ENCODE measurements at regions of chr17 and their contacts with region 1.

Region 1: DNA sequence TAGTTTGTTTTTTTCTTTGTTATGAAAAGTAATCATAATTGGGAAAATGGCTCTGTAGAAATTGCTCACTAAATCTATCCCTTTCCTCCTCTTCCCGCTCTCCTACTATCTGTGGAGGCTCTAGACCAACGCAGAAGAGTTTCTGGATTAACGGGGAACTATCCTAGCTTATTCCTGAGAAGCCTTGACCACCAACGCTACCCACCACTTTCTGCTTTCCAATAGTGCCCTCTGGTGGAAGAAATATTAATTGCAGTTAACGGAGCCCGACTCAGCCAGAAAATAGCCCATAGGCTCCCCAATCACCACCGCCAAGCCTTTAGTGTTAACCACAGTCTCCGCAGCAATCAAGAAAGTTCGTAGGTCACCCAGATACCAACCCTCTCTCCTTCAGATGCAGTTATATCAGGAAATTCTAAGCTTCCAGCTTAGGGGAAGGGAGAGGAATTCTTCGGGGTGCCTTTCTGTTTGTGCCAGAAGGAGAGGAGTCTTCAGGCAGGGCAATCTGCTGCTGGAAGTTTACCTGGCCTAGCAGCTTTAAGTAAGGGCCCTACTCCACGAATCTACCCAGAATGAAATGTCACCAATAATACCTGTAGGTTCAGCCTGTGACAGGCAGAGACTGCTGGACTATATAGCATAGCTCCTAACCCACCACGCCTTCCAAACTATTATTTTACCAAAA is 23.0 kb upstream of the NSRP1 start:
- DNase-seq: peak; percentile 89
- H3K4me3 Mint-ChIP-seq: no peak overlapping the region
- H3K27ac Mint-ChIP-seq: no peak overlapping the region
- H3K4me1 Mint-ChIP-seq: peaks cover 4% of the 10 kb centered on the region
- H3K27me3 Mint-ChIP-seq: peaks cover 49% of the 10 kb centered on the region

Region 2: GRCh38 chr17:30027676-30028075 is 65.9 kb before region 1 on chr17:
- intact Hi-C with region 1: loop called (anchors 2 kb)
- DNase-seq: no peak
- H3K4me3 Mint-ChIP-seq: no peak overlapping the region
- H3K27ac Mint-ChIP-seq: no peak overlapping the region
- H3K4me1 Mint-ChIP-seq: no peaks in the 10 kb centered on the region
- H3K27me3 Mint-ChIP-seq: peaks cover 3% of the 10 kb centered on the region

Region 3: GRCh38 chr17:30848021-30848420 is 754.4 kb after region 1 on chr17:
- intact Hi-C with region 1: no loop called
- DNase-seq: no peak
- H3K4me3 Mint-ChIP-seq: no peak overlapping the region
- H3K27ac Mint-ChIP-seq: no peak overlapping the region
- H3K4me1 Mint-ChIP-seq: no peaks in the 10 kb centered on the region
- H3K27me3 Mint-ChIP-seq: no peaks in the 10 kb centered on the region

Measured in activated CD4-positive, alpha-beta T cell treated with anti-CD3 and anti-CD28 coated beads, Interleukin-2, amount 10 ng/mL, durations not matched to agents 24 days and 14 days (primary cell).